Activated B cell treated with CpG ODN at 0.5 μM for 24 hours (primary cell): ENCODE measurements at regions of chr7 and their contacts with region 1.

Region 1: DNA sequence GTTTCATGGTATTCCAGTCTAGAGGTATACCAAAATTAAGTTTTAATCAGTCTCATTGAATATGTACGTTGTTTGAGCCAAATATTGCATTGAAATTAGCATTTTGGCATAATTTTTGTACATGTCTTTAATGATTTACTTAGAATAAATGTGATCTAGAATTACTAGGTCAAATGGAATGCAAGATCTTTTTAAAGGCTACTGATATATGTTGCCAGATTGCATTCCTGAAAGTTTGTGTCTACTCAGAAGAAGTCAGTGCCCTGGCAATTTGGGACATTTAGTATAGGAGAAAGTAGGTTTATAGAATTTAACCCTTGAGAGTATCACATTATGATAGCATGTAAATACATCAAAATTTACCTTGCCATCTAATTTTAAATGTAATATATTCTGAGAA is 32.4 kb downstream of the KMT2E start:
- DNase-seq: no peak
- ATAC-seq: no peak
- H3K4me3 Mint-ChIP-seq: no peak overlapping the region
- H3K27ac Mint-ChIP-seq: no peak overlapping the region
- H3K4me1 Mint-ChIP-seq: peaks cover 34% of the 10 kb centered on the region
- H3K27me3 Mint-ChIP-seq: no peaks in the 10 kb centered on the region
- CTCF ChIP-seq: no peak

Region 2: GRCh38 chr7:105060437-105060836 is 14.0 kb after region 1 on chr7:
- CTCF ChIA-PET with region 1: no interaction called
- POLR2A ChIA-PET with region 1: no interaction called
- intact Hi-C with region 1: loop called (anchors 1 kb)
- DNase-seq: no peak
- ATAC-seq: no peak
- H3K4me3 Mint-ChIP-seq: no peak overlapping the region
- H3K27ac Mint-ChIP-seq: no peak overlapping the region
- H3K4me1 Mint-ChIP-seq: peaks cover 40% of the 10 kb centered on the region
- H3K27me3 Mint-ChIP-seq: no peaks in the 10 kb centered on the region
- CTCF ChIP-seq: no peak